ENCODE measurements at regions of chrX and their contacts with region 1.

Region 1: GRCh38 chrX:100685284-100685996 is 41.4 kb downstream of the SRPX2 start:
- DNase-seq: no peak
- H3K4me3 ChIP-seq: no peak overlapping the region
- H3K27ac ChIP-seq: no peak overlapping the region
- H3K4me1 ChIP-seq: peaks cover 0 to 8% (median 0%) of the 10 kb centered on the region in 3 donors
- H3K27me3 ChIP-seq: no peaks in the 10 kb centered on the region
- CTCF ChIP-seq: peak; percentile 79 to 91 (median 88)
- POLR2A ChIP-seq: no peak

Region 2: GRCh38 chrX:100447654-100448397 is 237.6 kb before region 1 on chrX:
- intact Hi-C with region 1: no loop called
- DNase-seq: no peak
- H3K4me3 ChIP-seq: no peak overlapping the region
- H3K27ac ChIP-seq: no peak overlapping the region
- H3K4me1 ChIP-seq: peaks cover 0 to 6% (median 0%) of the 10 kb centered on the region in 3 donors
- H3K27me3 ChIP-seq: no peaks in the 10 kb centered on the region
- CTCF ChIP-seq: peak; percentile 54 to 85 (median 62)
- POLR2A ChIP-seq: no peak

Region 3: GRCh38 chrX:100717363-100717762 is 31.9 kb after region 1 on chrX:
- intact Hi-C with region 1: no loop called
- DNase-seq: no peak
- H3K4me3 ChIP-seq: no peak overlapping the region
- H3K27ac ChIP-seq: no peak overlapping the region
- H3K4me1 ChIP-seq: no peaks in the 10 kb centered on the region
- H3K27me3 ChIP-seq: no peaks in the 10 kb centered on the region
- CTCF ChIP-seq: no peak
- POLR2A ChIP-seq: no peak

Region 4: GRCh38 chrX:100768679-100769338 is 83.4 kb after region 1 on chrX:
- intact Hi-C with region 1: loop called (anchors 5 kb)
- DNase-seq: peak; percentile 41
- H3K4me3 ChIP-seq: no peak overlapping the region
- H3K27ac ChIP-seq: no peak overlapping the region
- H3K4me1 ChIP-seq: no peaks in the 10 kb centered on the region
- H3K27me3 ChIP-seq: no peaks in the 10 kb centered on the region
- CTCF ChIP-seq: peak; percentile 91 to 100 (median 99)
- POLR2A ChIP-seq: no peak